ENCODE measurements at regions of chr20 and their contacts with region 1.

Region 1: DNA sequence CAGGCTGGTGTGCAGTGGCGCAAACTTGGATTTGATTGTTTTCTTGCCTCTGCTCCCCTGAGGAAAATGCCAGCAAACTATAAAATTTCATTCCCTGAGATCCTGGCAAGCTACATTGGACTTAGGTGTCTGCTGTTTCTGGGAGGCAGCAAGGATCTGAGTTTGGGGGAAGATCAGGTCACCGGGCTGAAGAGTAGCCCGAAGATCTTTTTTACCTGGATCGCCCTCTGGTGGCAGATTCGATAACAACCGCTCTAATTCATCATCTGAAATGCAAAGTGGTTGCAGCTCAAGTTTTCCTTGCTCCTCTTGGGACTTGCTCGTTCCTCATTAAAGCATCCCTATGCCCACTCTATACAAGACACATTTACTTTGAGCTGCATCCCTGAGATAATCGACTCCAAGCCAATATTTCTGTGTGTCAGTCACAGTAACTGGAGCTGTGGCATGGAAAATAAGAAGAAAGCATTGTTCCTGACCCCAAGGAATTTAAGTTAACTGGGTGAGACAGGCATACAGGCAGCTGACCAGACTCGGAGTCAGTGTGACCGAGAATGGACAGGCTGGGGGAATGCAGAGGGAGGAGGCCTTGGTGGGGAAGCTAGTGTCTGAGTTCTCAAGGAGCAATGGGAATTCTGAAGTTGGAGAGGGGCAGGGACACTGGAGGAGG is 131.8 kb upstream of the PROKR2 start:
- DNase-seq: no peak
- ATAC-seq: peak; percentile 31

Region 2: GRCh38 chr20:5205348-5206210 is 243.0 kb before region 1 on chr20:
- intact Hi-C with region 1: loop called (anchors 10 kb)
- DNase-seq: peak; percentile 78
- ATAC-seq: peak; percentile 83